Endothelial cell of umbilical vein (primary cell): ENCODE measurements at regions of chr11 and their contacts with region 1.

Region 1: GRCh38 chr11:125164422-125165110 is at the start of gene PKNOX2:
- DNase-seq: peak; percentile 65
- H3K4me3 ChIP-seq: peak within 1 kb of the TSS; percentile 53 to 69 (median 63)
- H3K27ac ChIP-seq: no peak within 1 kb of the TSS
- H3K4me1 ChIP-seq: peaks cover 16% of the 10 kb centered on the region
- H3K27me3 ChIP-seq: peaks cover 32 to 35% of the 10 kb centered on the region in 2 experiments
- CTCF ChIP-seq: peak; percentile 36 to 82
- POLR2A ChIP-seq: no peak
- total RNA-seq, gene PKNOX2: 0.11 and 0.14 TPM in 2 replicates

Region 2: DNA sequence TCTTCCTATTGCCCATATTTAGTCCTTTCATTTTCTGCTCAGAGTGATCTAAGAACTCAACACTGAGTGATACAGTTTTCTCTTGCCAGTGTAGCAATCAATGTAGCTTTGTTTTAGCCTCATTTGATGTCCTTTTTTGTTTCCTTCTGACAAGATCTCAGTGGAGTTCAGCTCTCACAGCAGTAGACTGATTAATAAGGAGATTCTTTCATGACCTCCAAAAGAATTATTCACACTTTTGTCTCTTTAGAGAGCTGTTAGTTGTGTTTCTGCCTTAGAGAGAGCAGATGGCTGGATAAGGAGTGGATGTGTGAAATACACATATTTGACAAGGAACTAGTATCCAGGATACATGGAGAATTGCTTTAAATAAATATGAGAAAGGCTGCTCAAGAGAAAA is 1272.5 kb before region 1 on chr11:
- CTCF ChIA-PET with region 1: no interaction called
- POLR2A ChIA-PET with region 1: no interaction called
- dilution Hi-C with region 1: no loop called
- intact Hi-C with region 1: no loop called
- DNase-seq: no peak
- H3K4me3 ChIP-seq: no peak overlapping the region
- H3K27ac ChIP-seq: no peak overlapping the region
- H3K4me1 ChIP-seq: no peaks in the 10 kb centered on the region
- H3K27me3 ChIP-seq: no peaks in the 10 kb centered on the region
- CTCF ChIP-seq: no peak
- POLR2A ChIP-seq: no peak

Region 3: GRCh38 chr11:124842305-124842704 is 322.3 kb before region 1 on chr11:
- CTCF ChIA-PET with region 1: no interaction called
- POLR2A ChIA-PET with region 1: no interaction called
- dilution Hi-C with region 1: no loop called
- intact Hi-C with region 1: no loop called
- DNase-seq: no peak
- H3K4me3 ChIP-seq: no peak overlapping the region
- H3K27ac ChIP-seq: no peak overlapping the region
- H3K4me1 ChIP-seq: peaks cover 1% of the 10 kb centered on the region
- H3K27me3 ChIP-seq: peaks cover 79 to 95% of the 10 kb centered on the region in 2 experiments
- CTCF ChIP-seq: no peak
- POLR2A ChIP-seq: no peak

Region 4: DNA sequence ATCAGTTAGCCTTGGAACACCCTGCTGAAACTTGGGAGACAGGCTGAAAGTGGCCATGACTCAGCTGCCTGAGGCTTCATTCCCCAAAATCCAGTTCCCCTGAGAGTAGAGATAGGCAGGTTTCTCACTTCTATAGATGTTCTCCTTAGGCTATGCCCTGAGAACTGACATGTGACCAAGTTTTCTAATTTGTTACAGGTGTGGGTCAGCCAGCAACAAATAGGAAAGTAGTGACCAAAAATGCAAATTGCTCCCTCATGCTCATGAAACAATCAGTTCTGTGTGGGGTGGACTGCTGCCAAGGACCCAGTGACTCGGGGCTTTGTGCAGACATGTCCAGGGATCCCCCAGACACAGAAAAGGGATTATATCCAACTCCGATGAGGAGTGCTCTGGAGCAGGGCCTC is 217.8 kb before region 1 on chr11:
- CTCF ChIA-PET with region 1: no interaction called
- POLR2A ChIA-PET with region 1: no interaction called
- dilution Hi-C with region 1: no loop called
- intact Hi-C with region 1: no loop called
- DNase-seq: no peak
- H3K4me3 ChIP-seq: no peak overlapping the region
- H3K27ac ChIP-seq: no peak overlapping the region
- H3K4me1 ChIP-seq: no peaks in the 10 kb centered on the region
- H3K27me3 ChIP-seq: peaks cover 0 to 3% of the 10 kb centered on the region in 2 experiments
- CTCF ChIP-seq: no peak
- POLR2A ChIP-seq: no peak

Region 5: GRCh38 chr11:125091247-125091876 is 73.2 kb before region 1 on chr11:
- CTCF ChIA-PET with region 1: interaction called, 9 read pairs
- POLR2A ChIA-PET with region 1: no interaction called
- dilution Hi-C with region 1: no loop called
- intact Hi-C with region 1: loop called (anchors 2 kb)
- DNase-seq: peak; percentile 81
- H3K4me3 ChIP-seq: no peak overlapping the region
- H3K27ac ChIP-seq: peak overlapping the region; percentile 4
- H3K4me1 ChIP-seq: peaks cover 11% of the 10 kb centered on the region
- H3K27me3 ChIP-seq: no peaks in the 10 kb centered on the region
- CTCF ChIP-seq: peak; percentile 56 to 66
- POLR2A ChIP-seq: no peak

Region 6: GRCh38 chr11:125174686-125175085 is 10.1 kb after region 1 on chr11:
- CTCF ChIA-PET with region 1: interaction called, 17 read pairs
- POLR2A ChIA-PET with region 1: no interaction called
- dilution Hi-C with region 1: no loop called
- intact Hi-C with region 1: no loop called
- DNase-seq: no peak
- H3K4me3 ChIP-seq: no peak overlapping the region
- H3K27ac ChIP-seq: no peak overlapping the region
- H3K4me1 ChIP-seq: no peaks in the 10 kb centered on the region
- H3K27me3 ChIP-seq: peaks cover 3 to 15% of the 10 kb centered on the region in 2 experiments
- CTCF ChIP-seq: no peak
- POLR2A ChIP-seq: no peak

Region 7: DNA sequence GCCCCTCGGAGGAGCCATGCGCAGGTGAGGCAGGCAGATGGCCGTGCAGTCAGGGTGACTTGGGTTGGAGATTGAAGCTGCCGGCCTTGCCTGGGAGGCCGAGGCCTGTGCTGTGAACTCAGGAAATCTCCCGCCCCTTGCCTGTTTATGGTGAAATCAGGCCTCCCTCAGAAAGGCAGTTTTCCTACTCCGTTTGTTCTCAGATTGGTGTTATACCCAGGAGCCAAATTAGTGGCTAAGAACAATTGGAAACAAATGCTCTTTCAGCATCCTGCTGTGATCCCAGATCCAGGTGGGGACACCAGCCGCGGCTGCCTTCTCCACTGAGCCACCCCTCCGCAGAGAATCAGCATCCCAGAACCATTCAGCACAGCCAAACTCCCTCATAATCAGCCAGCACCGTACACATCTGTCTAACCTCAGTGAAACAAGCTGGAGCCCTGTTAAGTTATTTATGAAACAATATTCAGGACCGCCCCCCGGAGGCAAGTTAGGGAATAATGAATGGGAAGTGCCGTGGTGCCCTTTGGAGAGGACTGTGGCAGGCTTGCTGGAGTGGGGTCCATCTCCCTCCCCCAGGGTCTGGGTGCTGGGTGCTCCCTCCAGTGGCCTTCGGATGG is 59.9 kb after region 1 on chr11:
- CTCF ChIA-PET with region 1: interaction called, 15 read pairs
- POLR2A ChIA-PET with region 1: no interaction called
- dilution Hi-C with region 1: no loop called
- intact Hi-C with region 1: loop called (anchors 2 kb)
- DNase-seq: peak; percentile 45
- H3K4me3 ChIP-seq: no peak overlapping the region
- H3K27ac ChIP-seq: no peak overlapping the region
- H3K4me1 ChIP-seq: no peaks in the 10 kb centered on the region
- H3K27me3 ChIP-seq: peaks cover 0 to 2% of the 10 kb centered on the region in 2 experiments
- CTCF ChIP-seq: peak in 1 of 2 donors; percentile 28
- POLR2A ChIP-seq: no peak

Region 8: DNA sequence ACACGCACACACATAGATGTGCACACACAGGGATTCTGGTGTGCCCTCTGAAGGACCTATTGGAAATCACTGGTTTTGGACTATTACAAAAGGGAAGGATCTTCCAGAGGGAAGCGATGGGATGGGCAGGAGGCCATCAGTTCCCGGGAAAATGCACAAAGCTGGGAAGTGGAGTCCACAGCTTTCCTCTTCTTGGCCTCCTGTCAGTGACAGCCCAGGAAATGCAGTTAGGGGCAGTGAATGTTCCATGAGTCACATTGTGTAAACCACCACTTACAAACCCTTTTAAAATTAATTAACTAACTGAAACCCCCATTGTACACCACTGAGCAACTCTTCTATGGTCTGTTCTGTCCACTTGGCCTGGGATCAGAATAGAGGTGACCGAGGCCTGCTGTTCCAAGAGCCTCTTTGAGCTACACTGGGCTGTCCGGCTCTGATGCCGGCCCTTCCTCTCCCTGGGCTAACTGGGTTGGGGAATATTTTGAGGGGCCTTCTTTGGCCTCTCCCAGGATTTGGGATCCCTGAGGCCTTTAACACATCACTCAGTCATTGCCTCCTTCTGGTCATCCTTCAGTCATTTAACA is 193.8 kb after region 1 on chr11:
- CTCF ChIA-PET with region 1: interaction called, 11 read pairs
- POLR2A ChIA-PET with region 1: no interaction called
- dilution Hi-C with region 1: no loop called
- intact Hi-C with region 1: no loop called
- DNase-seq: no peak
- H3K4me3 ChIP-seq: no peak overlapping the region
- H3K27ac ChIP-seq: no peak overlapping the region
- H3K4me1 ChIP-seq: no peaks in the 10 kb centered on the region
- H3K27me3 ChIP-seq: no peaks in the 10 kb centered on the region
- CTCF ChIP-seq: no peak
- POLR2A ChIP-seq: no peak

Region 9: DNA sequence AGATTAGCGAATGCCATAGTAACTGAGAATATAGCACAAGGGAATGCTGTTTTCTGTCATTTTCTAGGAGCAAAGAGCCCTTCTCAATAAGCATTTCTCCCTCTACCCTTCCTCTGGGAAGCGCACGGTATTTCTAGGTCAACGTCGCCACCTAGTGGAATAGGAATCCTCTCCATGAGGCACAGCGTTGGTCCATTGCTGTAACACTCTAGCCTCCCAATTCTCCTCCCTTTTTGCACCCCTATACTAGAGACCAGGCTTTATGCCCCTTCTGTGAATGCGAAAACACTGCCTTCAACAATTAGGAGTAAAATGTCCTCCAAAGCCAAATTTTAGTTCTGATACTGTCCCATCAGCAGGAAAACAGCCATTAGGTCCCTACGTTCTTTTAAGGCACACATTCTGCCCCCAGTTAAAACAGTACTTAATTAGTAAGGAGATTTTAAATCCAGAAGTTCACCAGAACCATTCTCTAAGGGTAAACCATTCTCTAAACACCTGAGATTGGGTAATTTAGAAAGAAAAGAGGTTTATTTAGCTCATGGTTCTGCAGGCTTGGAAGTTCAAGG is 710.1 kb after region 1 on chr11:
- CTCF ChIA-PET with region 1: no interaction called
- POLR2A ChIA-PET with region 1: no interaction called
- dilution Hi-C with region 1: no loop called
- intact Hi-C with region 1: loop called (anchors 10 kb)
- DNase-seq: peak; percentile 66
- H3K4me3 ChIP-seq: no peak overlapping the region
- H3K27ac ChIP-seq: no peak overlapping the region
- H3K4me1 ChIP-seq: no peaks in the 10 kb centered on the region
- H3K27me3 ChIP-seq: no peaks in the 10 kb centered on the region
- CTCF ChIP-seq: peak; percentile 70 to 77
- POLR2A ChIP-seq: no peak